IMR-90 (cell line): ENCODE measurements at regions of chr2 and their contacts with region 1.

Region 1: GRCh38 chr2:146917431-146918042 is 927.3 kb upstream of the ACVR2A start:
- DNase-seq: no peak
- ATAC-seq: no peak
- H3K4me3 ChIP-seq: no peak overlapping the region
- H3K27ac ChIP-seq: no peak overlapping the region
- H3K4me1 ChIP-seq: no peaks in the 10 kb centered on the region
- H3K27me3 ChIP-seq: no peaks in the 10 kb centered on the region
- CTCF ChIP-seq: no peak
- POLR2A ChIP-seq: no peak
- RAD21 ChIP-seq: no peak

Region 2: DNA sequence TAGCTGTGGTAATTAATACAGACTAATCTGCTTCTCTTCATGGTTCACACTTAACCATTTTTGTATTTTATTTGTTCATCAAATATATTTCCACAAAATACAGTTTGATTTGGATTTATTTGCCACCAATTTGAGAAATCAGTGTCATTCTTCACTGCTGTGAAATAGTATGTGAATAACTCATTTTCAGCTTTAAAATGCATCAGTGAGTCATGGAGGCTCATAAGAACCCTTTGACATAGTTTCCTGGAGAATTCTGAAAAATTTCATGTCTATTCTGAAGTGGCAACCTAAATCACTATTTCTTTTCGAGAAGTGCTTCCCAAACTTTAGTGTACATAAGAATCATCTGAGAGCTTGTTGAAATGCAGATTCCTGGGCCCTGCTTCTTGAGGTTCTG is 99.4 kb before region 1 on chr2:
- CTCF ChIA-PET with region 1: no interaction called
- POLR2A ChIA-PET with region 1: no interaction called
- dilution Hi-C with region 1: no loop called
- in situ Hi-C with region 1: no loop called
- intact Hi-C with region 1: no loop called
- DNase-seq: peak; percentile 5
- ATAC-seq: no peak
- H3K4me3 ChIP-seq: no peak overlapping the region
- H3K27ac ChIP-seq: no peak overlapping the region
- H3K4me1 ChIP-seq: no peaks in the 10 kb centered on the region
- H3K27me3 ChIP-seq: no peaks in the 10 kb centered on the region
- CTCF ChIP-seq: no peak
- POLR2A ChIP-seq: no peak
- RAD21 ChIP-seq: no peak

Region 3: DNA sequence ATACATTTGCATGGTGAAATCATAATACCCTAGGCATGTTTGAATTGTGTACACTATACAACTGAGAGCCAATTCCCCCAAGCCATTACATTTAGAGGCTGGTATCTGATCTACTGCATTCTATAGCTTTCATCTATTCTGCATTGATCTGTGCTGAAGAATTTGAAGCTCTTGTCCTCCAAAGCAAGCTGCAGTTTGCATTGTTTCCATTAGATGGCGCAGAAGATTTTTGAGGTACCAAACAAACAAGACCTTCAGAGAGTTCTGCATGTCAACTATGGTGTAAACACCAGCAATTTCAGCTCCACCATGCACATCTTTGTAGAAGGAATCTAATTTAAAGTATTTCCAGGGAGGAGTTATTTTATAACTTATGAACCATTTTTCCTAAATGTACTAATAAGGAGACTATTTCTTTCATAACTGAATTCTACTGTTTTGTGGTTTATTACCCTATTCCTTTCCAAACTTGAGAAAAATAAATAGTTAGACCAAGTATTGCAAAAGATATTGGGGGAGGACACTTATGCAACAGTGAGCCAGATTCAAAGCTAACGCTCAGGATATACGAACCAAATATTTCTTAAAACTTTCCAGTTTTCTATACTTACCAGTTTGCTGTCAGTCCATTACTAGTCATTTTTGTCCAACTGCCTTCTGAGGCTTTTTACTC is 165.4 kb after region 1 on chr2:
- CTCF ChIA-PET with region 1: no interaction called
- POLR2A ChIA-PET with region 1: no interaction called
- dilution Hi-C with region 1: no loop called
- in situ Hi-C with region 1: no loop called
- intact Hi-C with region 1: no loop called
- DNase-seq: peak; percentile 62
- ATAC-seq: peak; percentile 82
- H3K4me3 ChIP-seq: no peak overlapping the region
- H3K27ac ChIP-seq: no peak overlapping the region
- H3K4me1 ChIP-seq: no peaks in the 10 kb centered on the region; the same call in 1 of the 2 replicates
- H3K27me3 ChIP-seq: no peaks in the 10 kb centered on the region
- CTCF ChIP-seq: peak; percentile 55
- POLR2A ChIP-seq: no peak
- RAD21 ChIP-seq: peak; percentile 21; the same call in 1 of the 2 replicates

Region 4: GRCh38 chr2:147696448-147696847 is 778.9 kb after region 1 on chr2:
- CTCF ChIA-PET with region 1: no interaction called
- POLR2A ChIA-PET with region 1: no interaction called
- dilution Hi-C with region 1: no loop called
- in situ Hi-C with region 1: no loop called
- intact Hi-C with region 1: loop called (anchors 10 kb)
- DNase-seq: no peak
- ATAC-seq: no peak
- H3K4me3 ChIP-seq: no peak overlapping the region
- H3K27ac ChIP-seq: no peak overlapping the region
- H3K4me1 ChIP-seq: no peaks in the 10 kb centered on the region
- H3K27me3 ChIP-seq: no peaks in the 10 kb centered on the region
- CTCF ChIP-seq: no peak
- POLR2A ChIP-seq: no peak
- RAD21 ChIP-seq: no peak